Sigmoid colon (tissue), 7 donors: ENCODE measurements at regions of chr2 and their contacts with region 1.

Region 1: DNA sequence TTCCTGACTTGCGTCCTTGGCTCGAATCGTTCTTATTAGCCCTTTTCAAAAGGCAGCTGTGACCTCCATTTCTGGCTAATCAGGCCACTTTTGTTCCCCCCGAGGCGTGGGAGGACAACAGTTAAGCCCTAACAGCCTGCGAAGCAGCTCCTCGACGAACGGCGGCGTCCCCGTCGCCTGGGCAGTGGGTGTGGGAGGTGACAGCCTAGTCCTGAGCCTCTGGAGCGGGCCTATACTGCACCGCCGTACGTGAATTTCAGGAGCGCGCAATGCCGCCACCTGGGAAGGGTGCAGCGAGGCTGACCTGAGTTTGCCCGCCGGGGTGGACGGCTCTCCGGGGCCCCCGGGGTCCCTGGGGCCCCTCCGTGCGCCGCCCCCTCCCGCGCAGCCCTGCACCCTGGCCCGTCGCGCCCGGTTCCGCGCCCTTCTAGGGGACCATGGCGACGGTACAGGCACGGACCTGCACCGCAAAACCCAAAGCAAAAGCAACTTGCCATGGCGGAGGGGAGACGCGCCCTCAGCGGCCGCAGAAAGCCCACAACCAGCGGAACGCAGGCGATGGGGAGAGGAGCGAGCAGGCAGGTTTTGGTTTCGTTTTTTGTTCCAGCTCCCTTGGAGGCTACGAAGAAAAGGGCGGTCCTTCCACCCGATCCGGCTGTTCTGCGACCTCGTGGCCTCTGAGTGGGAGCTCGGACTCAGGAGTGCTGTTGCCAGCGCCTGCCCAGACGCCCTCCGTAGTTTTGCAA is at the start of gene RBM43:
- DNase-seq: peak; percentile 95
- H3K4me3 ChIP-seq: peak within 1 kb of the TSS; percentile 82 to 96 (median 90)
- H3K27ac ChIP-seq: peak within 1 kb of the TSS; percentile 93 to 99 (median 97)
- H3K4me1 ChIP-seq: peaks cover 0 to 28% (median 10%) of the 10 kb centered on the region in 4 donors
- H3K27me3 ChIP-seq: no peaks in the 10 kb centered on the region
- CTCF ChIP-seq: no peak
- EP300 ChIP-seq: no peak
- POLR2A ChIP-seq: peak; percentile 23 to 43
- total RNA-seq, gene RBM43: 8.6 to 16.9 (median 10.4) TPM

Region 2: DNA sequence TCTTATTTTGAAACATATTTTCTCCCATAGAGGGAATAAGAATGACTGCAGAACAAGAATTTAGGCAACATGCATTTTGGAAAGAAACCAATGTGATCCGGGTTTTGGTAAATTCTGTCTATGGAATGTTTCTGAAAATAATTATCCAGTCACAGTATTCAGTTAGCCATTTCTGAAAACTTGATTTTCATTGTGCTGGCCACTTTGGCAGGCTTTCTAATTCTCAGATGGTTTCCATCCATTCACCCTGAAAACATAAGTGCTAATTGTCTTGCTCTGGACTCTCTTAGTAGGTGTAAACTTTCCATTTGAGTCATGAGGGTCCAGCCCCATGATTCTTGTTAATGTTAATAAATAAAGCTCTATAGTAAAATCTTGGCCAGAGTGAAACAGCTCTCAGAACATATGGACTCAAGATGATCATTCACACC is 176.2 kb before region 1 on chr2:
- intact Hi-C with region 1: no loop called
- DNase-seq: no peak
- H3K4me3 ChIP-seq: no peak overlapping the region
- H3K27ac ChIP-seq: no peak overlapping the region
- H3K4me1 ChIP-seq: no peaks in the 10 kb centered on the region
- H3K27me3 ChIP-seq: no peaks in the 10 kb centered on the region
- CTCF ChIP-seq: no peak
- EP300 ChIP-seq: no peak
- POLR2A ChIP-seq: no peak

Region 3: DNA sequence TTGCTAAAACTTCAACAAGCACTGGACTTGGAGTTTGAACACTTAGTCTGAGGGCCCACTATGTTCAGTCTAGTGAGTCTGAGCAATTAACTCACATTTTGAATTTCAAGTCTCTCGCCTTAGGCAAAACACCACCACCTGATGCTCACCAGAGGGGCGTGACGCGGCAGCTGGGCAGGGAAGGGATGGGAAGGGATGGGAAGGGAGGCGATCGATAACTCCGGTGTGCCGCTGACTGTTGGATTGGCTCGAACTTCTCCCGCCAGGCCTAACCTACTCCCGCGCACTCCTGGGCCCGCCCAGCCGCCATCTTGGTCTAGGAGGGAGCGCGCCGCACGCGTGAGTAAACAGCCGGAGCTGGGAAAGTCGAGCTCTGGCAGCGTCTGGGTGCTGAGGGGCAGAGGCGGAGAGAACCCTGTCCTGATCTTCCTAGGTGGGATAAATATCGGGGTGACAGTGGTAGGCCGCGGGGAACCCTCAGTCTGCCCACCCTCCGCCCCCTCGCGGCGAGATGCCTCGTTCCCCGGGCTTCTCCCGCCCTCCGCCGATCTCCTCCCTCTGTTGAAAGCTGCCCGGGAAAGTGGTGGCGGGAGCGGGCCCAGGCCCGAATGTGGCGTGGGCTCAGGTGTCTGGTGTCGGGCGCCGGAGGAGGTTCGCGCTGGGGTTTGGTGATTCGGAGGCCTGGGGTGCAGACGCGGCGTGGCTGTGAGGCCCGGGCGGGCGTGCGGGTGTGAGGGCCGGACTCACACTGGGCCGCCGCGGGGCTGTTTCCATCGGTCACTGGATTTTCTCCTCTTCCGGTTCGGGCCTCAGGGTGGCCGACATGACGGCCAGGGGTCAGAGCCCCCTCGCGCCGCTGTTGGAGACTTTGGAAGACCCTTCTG is 148.4 kb after region 1 on chr2 and contains the start of gene RIF1:
- intact Hi-C with region 1: loop called (anchors 5 kb)
- DNase-seq: peak; percentile 94
- H3K4me3 ChIP-seq: peak within 1 kb of the TSS; percentile 68 to 98 (median 92)
- H3K27ac ChIP-seq: peak within 1 kb of the TSS; percentile 87 to 94 (median 91)
- H3K4me1 ChIP-seq: peaks cover 0 to 23% (median 17%) of the 10 kb centered on the region in 4 donors
- H3K27me3 ChIP-seq: no peaks in the 10 kb centered on the region
- CTCF ChIP-seq: peak; percentile 66 to 91 (median 78)
- EP300 ChIP-seq: no peak
- POLR2A ChIP-seq: no peak
- total RNA-seq, gene RIF1: 31.3 to 38.2 (median 32.9) TPM